ENCODE measurements at regions of chr10 and their contacts with region 1.

Region 1: DNA sequence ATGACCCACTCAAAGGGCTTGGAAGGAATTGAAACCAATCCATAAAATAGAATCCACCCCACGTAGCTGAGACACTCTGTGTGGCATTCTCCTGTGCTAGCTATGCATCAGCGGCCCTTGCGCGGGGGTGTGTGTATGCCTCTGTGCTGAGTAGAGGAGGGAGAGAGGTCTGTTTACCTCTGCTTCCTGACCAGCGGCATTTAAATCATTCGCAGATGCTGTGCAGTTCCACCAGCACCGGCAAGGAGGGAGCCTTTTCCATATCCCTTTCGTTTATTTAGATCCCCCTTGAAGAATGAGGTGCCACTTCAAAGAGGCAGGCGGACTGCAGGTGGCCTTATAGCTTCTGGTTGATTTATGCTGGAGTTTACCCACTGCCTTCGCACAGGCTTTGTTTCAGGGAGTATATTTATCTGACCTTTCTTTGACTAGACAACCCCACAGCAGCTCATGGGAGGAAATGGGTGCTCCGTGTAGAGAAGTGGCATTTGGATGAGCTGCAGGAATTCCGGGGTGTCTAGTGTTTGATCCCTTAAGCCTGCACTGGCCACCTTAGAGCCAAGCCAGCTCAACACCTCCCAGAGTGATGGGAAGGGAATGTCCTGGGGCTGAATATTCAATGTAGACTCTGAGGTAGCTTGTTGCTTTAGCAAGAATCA is 11.4 kb downstream of the C10orf53 start:
- DNase-seq: no peak
- ATAC-seq: peak; percentile 48
- H3K4me3 Mint-ChIP-seq: peak overlapping the region; percentile 59
- H3K27ac Mint-ChIP-seq: no peak overlapping the region
- H3K4me1 Mint-ChIP-seq: peaks cover 56% of the 10 kb centered on the region
- H3K27me3 Mint-ChIP-seq: peaks cover 100% of the 10 kb centered on the region
- CTCF ChIP-seq: no peak

Region 2: GRCh38 chr10:49679480-49679893 is 11.3 kb before region 1 on chr10 and contains the start of gene C10orf53:
- CTCF ChIA-PET with region 1: interaction called, 11 read pairs
- POLR2A ChIA-PET with region 1: interaction called, 4 read pairs
- DNase-seq: peak; percentile 78
- ATAC-seq: peak; percentile 99
- H3K4me3 Mint-ChIP-seq: peak within 1 kb of the TSS; percentile 70
- H3K27ac Mint-ChIP-seq: no peak within 1 kb of the TSS
- H3K4me1 Mint-ChIP-seq: 0 out of 2 replicates have a peak, but pooled peaks cover 6% of the 10 kb centered on the region
- H3K27me3 Mint-ChIP-seq: peaks cover 97% of the 10 kb centered on the region
- CTCF ChIP-seq: no peak
- total RNA-seq, gene C10orf53: not detected in 3 replicates

Region 3: DNA sequence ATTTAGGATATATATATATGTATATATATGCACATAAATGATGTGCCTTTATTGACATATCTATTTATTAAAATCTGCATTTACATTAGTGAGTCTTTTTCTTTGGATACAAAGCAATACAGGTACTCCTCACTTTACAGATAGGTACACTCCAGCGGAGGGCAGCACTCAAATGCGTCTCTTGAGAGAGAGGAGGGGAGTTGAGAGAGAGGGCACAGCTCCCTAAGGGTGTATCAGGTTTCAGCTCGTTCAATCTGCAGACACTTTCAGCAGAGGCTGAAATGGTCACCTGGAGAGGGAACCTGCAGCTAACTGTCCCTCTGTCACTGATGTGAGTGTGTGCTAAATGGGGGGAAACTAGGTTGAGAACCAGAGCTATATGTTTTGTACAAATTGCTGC is 10.2 kb after region 1 on chr10:
- CTCF ChIA-PET with region 1: interaction called, 16 read pairs
- POLR2A ChIA-PET with region 1: interaction called, 3 read pairs
- DNase-seq: peak; percentile 37
- ATAC-seq: peak; percentile 99
- H3K4me3 Mint-ChIP-seq: no peak overlapping the region
- H3K27ac Mint-ChIP-seq: no peak overlapping the region
- H3K4me1 Mint-ChIP-seq: peaks cover 21% of the 10 kb centered on the region
- H3K27me3 Mint-ChIP-seq: peaks cover 56% of the 10 kb centered on the region
- CTCF ChIP-seq: no peak